GM12878 (cell line): ENCODE measurements at regions of chr15 and their contacts with region 1.

Region 1: GRCh38 chr15:94287794-94288246 is 56.5 kb downstream of the MCTP2 start:
- DNase-seq: peak; percentile 66
- ATAC-seq: peak; percentile 97
- H3K4me3 ChIP-seq: no peak overlapping the region
- H3K27ac ChIP-seq: peak overlapping the region; percentile 47; the same call in 1 of the 2 replicates
- H3K4me1 ChIP-seq: peaks cover 15% of the 10 kb centered on the region
- H3K27me3 ChIP-seq: no peaks in the 10 kb centered on the region
- CTCF ChIP-seq: peak in 1 of 3 experiments; percentile 18; a peak in 1 of 6 replicates
- EP300 ChIP-seq: peak; percentile 74 to 91; a peak in 3 of 4 replicates
- POLR2A ChIP-seq: no peak
- RAD21 ChIP-seq: no peak

Region 2: DNA sequence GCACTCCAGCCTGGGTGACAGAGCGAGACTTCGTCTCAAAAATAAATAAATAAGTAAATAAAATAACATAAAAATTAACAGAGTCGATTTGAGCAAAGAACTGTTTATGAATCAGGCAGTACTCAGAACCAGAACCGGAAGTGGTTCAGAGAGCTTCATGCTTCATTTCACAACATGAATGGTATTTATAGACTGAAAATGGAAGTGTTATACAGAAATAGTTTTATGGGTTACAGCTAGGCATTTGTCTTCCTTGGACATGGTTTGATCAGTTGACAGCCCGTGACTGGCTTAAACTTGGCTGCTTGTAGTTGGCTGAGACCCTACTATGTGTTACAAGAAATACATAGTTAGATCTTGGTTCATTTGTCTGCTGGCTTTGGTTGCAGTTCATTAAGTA is 272.5 kb before region 1 on chr15:
- CTCF ChIA-PET with region 1: no interaction called
- POLR2A ChIA-PET with region 1: no interaction called
- RAD21 ChIA-PET with region 1: no interaction called
- SMC1A ChIA-PET with region 1: no interaction called
- in situ Hi-C with region 1: no loop called
- intact Hi-C with region 1: no loop called
- DNase-seq: no peak
- ATAC-seq: no peak
- H3K4me3 ChIP-seq: no peak overlapping the region
- H3K27ac ChIP-seq: no peak overlapping the region
- H3K4me1 ChIP-seq: no peaks in the 10 kb centered on the region
- H3K27me3 ChIP-seq: no peaks in the 10 kb centered on the region
- CTCF ChIP-seq: no peak
- EP300 ChIP-seq: no peak
- POLR2A ChIP-seq: no peak
- RAD21 ChIP-seq: no peak

Region 3: GRCh38 chr15:94238539-94239118 is 49.2 kb before region 1 on chr15:
- CTCF ChIA-PET with region 1: interaction called, 62 read pairs
- POLR2A ChIA-PET with region 1: interaction called, 94 read pairs
- RAD21 ChIA-PET with region 1: interaction called, 120 read pairs
- SMC1A ChIA-PET with region 1: interaction called, 156 read pairs
- in situ Hi-C with region 1: no loop called
- intact Hi-C with region 1: loop called (anchors 5 kb)
- DNase-seq: no peak
- ATAC-seq: peak; percentile 85
- H3K4me3 ChIP-seq: no peak overlapping the region
- H3K27ac ChIP-seq: no peak overlapping the region
- H3K4me1 ChIP-seq: 0 out of 2 replicates have a peak, but pooled peaks cover 5% of the 10 kb centered on the region
- H3K27me3 ChIP-seq: no peaks in the 10 kb centered on the region
- CTCF ChIP-seq: no peak
- EP300 ChIP-seq: peak in 1 of 2 experiments; percentile 25; a peak in 1 of 4 replicates
- POLR2A ChIP-seq: no peak
- RAD21 ChIP-seq: no peak

Region 4: GRCh38 chr15:94253742-94254141 is 34.1 kb before region 1 on chr15:
- CTCF ChIA-PET with region 1: interaction called, 9 read pairs
- POLR2A ChIA-PET with region 1: interaction called, 7 read pairs
- RAD21 ChIA-PET with region 1: interaction called, 16 read pairs
- SMC1A ChIA-PET with region 1: interaction called, 20 read pairs
- in situ Hi-C with region 1: no loop called
- intact Hi-C with region 1: no loop called
- DNase-seq: no peak
- ATAC-seq: peak; percentile 83
- H3K4me3 ChIP-seq: no peak overlapping the region
- H3K27ac ChIP-seq: no peak overlapping the region
- H3K4me1 ChIP-seq: no peaks in the 10 kb centered on the region
- H3K27me3 ChIP-seq: no peaks in the 10 kb centered on the region
- CTCF ChIP-seq: no peak
- EP300 ChIP-seq: no peak
- POLR2A ChIP-seq: no peak
- RAD21 ChIP-seq: no peak

Region 5: DNA sequence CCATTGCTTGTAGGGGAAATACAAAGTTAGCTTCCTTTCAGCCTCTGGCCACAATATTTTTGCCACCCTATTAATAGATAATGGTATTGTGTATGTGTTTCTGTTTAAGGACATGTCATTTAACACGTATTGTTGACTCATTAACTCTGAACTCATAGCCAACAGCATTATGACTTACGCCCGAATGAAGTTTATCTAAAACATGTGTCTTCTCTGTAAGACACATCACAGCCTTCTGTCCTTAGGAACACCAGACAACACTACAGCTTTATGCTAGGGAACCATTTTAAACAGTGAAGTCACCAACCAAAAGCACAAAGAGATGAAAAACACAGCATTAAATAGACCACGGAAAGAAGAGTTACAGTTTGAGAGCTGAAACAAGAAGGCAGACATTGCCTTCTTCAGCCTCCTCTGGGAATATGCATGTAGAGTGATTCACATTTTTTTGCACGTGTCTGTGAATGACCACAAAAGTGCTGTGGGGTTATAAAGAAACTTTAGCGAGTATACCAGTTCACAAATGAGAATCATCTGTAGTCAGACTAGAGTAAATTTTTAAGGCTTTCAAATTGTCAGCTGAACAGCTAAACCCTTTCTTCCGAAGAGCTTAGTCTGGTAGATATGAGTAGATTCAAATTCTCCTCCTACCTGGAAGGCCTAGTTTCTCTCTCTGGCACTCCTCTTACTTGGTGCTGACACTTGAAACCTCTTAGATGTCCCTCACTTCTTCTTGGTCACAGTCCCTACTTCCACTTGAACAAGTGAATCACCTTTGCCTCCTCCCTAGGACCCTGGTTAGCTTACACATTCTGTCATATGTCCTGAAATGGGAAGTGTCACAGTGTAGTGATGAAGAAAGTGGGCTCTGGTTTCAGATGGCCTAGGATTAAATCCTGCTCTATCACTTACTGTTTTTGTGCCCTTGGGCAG is 24.2 kb before region 1 on chr15:
- CTCF ChIA-PET with region 1: interaction called, 9 read pairs
- POLR2A ChIA-PET with region 1: interaction called, 21 read pairs
- RAD21 ChIA-PET with region 1: interaction called, 59 read pairs
- SMC1A ChIA-PET with region 1: interaction called, 106 read pairs
- in situ Hi-C with region 1: no loop called
- intact Hi-C with region 1: loop called (anchors 2 kb)
- DNase-seq: peak; percentile 73
- ATAC-seq: peak; percentile 78
- H3K4me3 ChIP-seq: no peak overlapping the region
- H3K27ac ChIP-seq: no peak overlapping the region
- H3K4me1 ChIP-seq: peaks cover 2% of the 10 kb centered on the region; the same call in 1 of the 2 replicates
- H3K27me3 ChIP-seq: no peaks in the 10 kb centered on the region
- CTCF ChIP-seq: no peak
- EP300 ChIP-seq: peak; percentile 45 to 55; a peak in 2 of 4 replicates
- POLR2A ChIP-seq: no peak
- RAD21 ChIP-seq: no peak

Region 6: DNA sequence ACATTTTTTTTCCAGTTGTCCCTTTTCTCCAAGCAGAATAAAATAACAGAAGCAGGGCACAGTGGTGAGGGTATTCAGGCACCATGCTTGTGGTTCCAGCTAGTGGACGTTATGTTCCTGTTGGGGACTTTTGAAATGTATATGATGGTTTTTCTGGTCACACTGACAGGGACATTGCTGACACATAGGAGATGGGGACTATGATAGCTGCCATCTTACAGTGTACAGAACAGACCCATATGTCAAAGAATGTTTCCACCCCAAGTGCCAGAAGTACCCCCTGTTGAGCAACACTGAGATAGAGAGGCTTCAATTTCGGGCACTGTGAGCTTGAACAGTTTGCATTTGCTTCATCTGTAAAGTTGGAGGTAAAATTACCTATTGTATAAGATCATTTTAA is 17.9 kb before region 1 on chr15:
- CTCF ChIA-PET with region 1: interaction called, 12 read pairs
- POLR2A ChIA-PET with region 1: interaction called, 8 read pairs
- RAD21 ChIA-PET with region 1: interaction called, 59 read pairs
- SMC1A ChIA-PET with region 1: interaction called, 106 read pairs
- in situ Hi-C with region 1: no loop called
- intact Hi-C with region 1: no loop called
- DNase-seq: no peak
- ATAC-seq: no peak
- H3K4me3 ChIP-seq: no peak overlapping the region
- H3K27ac ChIP-seq: no peak overlapping the region
- H3K4me1 ChIP-seq: no peaks in the 10 kb centered on the region
- H3K27me3 ChIP-seq: no peaks in the 10 kb centered on the region
- CTCF ChIP-seq: no peak
- EP300 ChIP-seq: no peak
- POLR2A ChIP-seq: no peak
- RAD21 ChIP-seq: no peak

Region 7: DNA sequence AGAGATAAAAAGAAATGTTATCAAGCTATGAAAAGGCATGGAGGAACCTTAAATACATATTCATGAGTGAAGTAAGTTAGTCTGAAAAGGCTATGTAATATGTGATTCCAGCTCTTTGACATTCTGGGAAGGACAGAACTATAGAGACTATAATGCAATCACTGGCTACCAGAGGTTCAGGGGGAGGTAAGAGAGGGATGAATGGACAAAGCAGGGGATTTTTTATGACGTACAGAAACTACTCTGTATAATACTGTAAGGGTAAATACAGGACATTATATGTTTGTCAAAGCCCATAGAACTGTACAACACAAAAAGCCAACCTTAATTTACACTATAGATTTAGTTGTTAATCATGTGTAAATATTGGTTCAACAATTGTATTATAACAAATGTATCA is 10.3 kb before region 1 on chr15:
- CTCF ChIA-PET with region 1: interaction called, 17 read pairs
- POLR2A ChIA-PET with region 1: interaction called, 25 read pairs
- RAD21 ChIA-PET with region 1: interaction called, 28 read pairs
- SMC1A ChIA-PET with region 1: interaction called, 53 read pairs
- in situ Hi-C with region 1: no loop called
- intact Hi-C with region 1: no loop called
- DNase-seq: no peak
- ATAC-seq: peak; percentile 78
- H3K4me3 ChIP-seq: no peak overlapping the region
- H3K27ac ChIP-seq: no peak overlapping the region
- H3K4me1 ChIP-seq: no peaks in the 10 kb centered on the region
- H3K27me3 ChIP-seq: no peaks in the 10 kb centered on the region
- CTCF ChIP-seq: no peak
- EP300 ChIP-seq: no peak; a peak in 1 of 4 replicates
- POLR2A ChIP-seq: no peak
- RAD21 ChIP-seq: no peak

Region 8: DNA sequence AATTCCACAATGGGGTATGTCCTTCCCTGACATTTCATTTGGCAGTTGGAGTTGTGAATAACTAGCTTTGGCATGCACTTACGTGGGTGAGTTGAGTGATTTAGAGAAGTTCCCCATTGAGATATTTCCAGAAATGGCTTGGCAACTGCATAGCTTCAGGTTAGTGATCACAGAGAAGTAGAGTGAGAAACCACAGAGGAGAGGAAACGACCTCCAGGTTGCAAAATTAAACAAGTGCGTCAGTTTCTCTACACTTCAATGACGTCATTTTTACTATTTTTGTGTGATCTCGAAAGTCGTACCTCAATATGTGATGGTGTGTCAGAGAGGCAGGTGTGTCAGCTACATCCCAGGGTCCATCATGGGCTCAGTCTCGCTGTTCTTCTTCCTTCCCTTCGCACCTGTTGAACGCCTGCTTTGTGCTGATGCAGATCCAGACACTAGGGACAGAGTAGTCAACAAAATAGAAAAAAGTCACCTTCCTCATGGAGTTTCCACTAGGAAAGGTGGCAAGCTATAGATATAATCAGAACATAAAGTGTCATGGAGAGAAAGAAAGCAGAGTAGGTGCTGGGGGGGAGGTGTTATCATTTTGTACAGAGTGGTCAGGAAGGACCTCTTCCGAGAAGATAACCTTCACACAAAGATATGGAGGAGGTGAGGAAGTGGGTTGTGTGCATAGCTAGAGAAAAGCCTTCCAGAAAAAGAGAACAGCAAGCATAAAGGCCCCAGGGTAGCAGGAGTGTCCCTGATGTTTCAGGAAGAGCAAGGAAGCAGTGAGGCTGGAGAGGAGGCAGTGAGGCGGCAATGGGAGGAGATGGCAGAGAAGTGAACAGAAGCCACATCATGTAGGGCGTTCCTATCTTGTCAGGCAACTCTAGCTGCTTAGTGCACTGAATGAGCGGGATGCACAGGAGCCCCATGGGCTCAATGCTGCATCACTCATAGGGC is 19.2 kb after region 1 on chr15:
- CTCF ChIA-PET with region 1: interaction called, 23 read pairs
- POLR2A ChIA-PET with region 1: interaction called, 30 read pairs
- RAD21 ChIA-PET with region 1: interaction called, 45 read pairs
- SMC1A ChIA-PET with region 1: interaction called, 140 read pairs
- in situ Hi-C with region 1: no loop called
- intact Hi-C with region 1: no loop called
- DNase-seq: peak; percentile 78
- ATAC-seq: peak; percentile 91
- H3K4me3 ChIP-seq: no peak overlapping the region
- H3K27ac ChIP-seq: no peak overlapping the region
- H3K4me1 ChIP-seq: peaks cover 13% of the 10 kb centered on the region
- H3K27me3 ChIP-seq: no peaks in the 10 kb centered on the region
- CTCF ChIP-seq: no peak
- EP300 ChIP-seq: peak; percentile 94 to 96
- POLR2A ChIP-seq: no peak
- RAD21 ChIP-seq: no peak

Region 9: DNA sequence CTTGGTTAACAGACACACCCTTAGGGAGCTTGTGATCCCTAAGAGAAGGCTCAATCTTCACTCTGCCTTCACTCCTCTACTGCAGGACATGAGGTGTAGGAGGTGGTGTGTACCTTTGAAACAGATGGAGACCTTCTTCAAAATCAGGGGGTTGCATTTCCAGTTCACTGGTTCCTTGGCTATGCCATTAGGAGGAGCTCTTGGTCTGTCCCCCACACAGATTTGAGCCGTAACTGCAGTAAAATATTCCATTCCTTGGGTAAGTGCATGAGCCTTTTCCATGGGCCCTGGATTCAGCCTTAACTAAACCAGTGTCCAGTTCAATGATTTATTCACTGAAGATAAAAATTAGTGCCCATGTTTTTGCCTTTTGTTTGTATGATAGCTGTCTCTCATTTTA is 88.2 kb after region 1 on chr15:
- CTCF ChIA-PET with region 1: no interaction called
- POLR2A ChIA-PET with region 1: no interaction called
- RAD21 ChIA-PET with region 1: no interaction called
- SMC1A ChIA-PET with region 1: no interaction called
- in situ Hi-C with region 1: no loop called
- intact Hi-C with region 1: no loop called
- DNase-seq: no peak
- ATAC-seq: no peak
- H3K4me3 ChIP-seq: no peak overlapping the region
- H3K27ac ChIP-seq: no peak overlapping the region
- H3K4me1 ChIP-seq: no peaks in the 10 kb centered on the region
- H3K27me3 ChIP-seq: no peaks in the 10 kb centered on the region
- CTCF ChIP-seq: 0 out of 6 replicates have a peak, but pooled peaks of 1 of the 3 experiments have one; percentile 1
- EP300 ChIP-seq: no peak
- POLR2A ChIP-seq: no peak
- RAD21 ChIP-seq: no peak

Region 10: DNA sequence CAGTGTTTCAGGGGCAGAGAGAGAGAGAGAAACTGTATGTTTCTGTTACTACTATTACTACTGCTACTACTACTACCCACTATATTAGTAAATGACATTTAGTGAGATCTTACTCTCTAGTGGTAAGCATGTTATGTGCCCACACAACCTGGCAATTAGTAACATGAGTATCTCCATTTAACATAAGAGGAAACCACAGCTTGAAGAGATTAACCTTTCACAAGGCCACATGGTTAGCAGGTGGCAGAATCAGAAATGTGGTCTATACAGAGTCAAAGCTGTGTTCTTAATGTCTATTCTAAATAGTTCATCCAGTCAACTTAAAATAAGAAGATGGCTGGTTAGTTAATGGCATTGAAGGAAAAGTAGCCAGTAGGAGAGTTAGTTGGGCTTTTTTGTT is 905.1 kb after region 1 on chr15:
- CTCF ChIA-PET with region 1: no interaction called
- POLR2A ChIA-PET with region 1: no interaction called
- RAD21 ChIA-PET with region 1: no interaction called
- SMC1A ChIA-PET with region 1: no interaction called
- in situ Hi-C with region 1: no loop called
- intact Hi-C with region 1: no loop called
- DNase-seq: no peak
- ATAC-seq: peak; percentile 72
- H3K4me3 ChIP-seq: no peak overlapping the region
- H3K27ac ChIP-seq: no peak overlapping the region
- H3K4me1 ChIP-seq: no peaks in the 10 kb centered on the region
- H3K27me3 ChIP-seq: no peaks in the 10 kb centered on the region
- CTCF ChIP-seq: no peak
- EP300 ChIP-seq: no peak
- POLR2A ChIP-seq: no peak
- RAD21 ChIP-seq: no peak